Activated CD4-positive, alpha-beta memory T cell treated with anti-CD3 and anti-CD28 coated beads for 36 hours (primary cell): ENCODE measurements at regions of chr14 and their contacts with region 1.

Region 1: GRCh38 chr14:92352158-92352985 is 29.4 kb downstream of the SLC24A4 start:
- DNase-seq: peak; percentile 65
- H3K4me3 Mint-ChIP-seq: no peak overlapping the region
- H3K27ac Mint-ChIP-seq: no peak overlapping the region
- H3K4me1 Mint-ChIP-seq: peaks cover 2% of the 10 kb centered on the region
- H3K27me3 Mint-ChIP-seq: peaks cover 16% of the 10 kb centered on the region

Region 2: GRCh38 chr14:91866061-91866460 is 486.3 kb before region 1 on chr14:
- CTCF ChIA-PET with region 1: no interaction called
- POLR2A ChIA-PET with region 1: no interaction called
- intact Hi-C with region 1: loop called (anchors 10 kb)
- DNase-seq: peak; percentile 73
- H3K4me3 Mint-ChIP-seq: peak overlapping the region; percentile 87
- H3K27ac Mint-ChIP-seq: peak overlapping the region; percentile 94
- H3K4me1 Mint-ChIP-seq: peaks cover 92% of the 10 kb centered on the region
- H3K27me3 Mint-ChIP-seq: no peaks in the 10 kb centered on the region

Region 3: DNA sequence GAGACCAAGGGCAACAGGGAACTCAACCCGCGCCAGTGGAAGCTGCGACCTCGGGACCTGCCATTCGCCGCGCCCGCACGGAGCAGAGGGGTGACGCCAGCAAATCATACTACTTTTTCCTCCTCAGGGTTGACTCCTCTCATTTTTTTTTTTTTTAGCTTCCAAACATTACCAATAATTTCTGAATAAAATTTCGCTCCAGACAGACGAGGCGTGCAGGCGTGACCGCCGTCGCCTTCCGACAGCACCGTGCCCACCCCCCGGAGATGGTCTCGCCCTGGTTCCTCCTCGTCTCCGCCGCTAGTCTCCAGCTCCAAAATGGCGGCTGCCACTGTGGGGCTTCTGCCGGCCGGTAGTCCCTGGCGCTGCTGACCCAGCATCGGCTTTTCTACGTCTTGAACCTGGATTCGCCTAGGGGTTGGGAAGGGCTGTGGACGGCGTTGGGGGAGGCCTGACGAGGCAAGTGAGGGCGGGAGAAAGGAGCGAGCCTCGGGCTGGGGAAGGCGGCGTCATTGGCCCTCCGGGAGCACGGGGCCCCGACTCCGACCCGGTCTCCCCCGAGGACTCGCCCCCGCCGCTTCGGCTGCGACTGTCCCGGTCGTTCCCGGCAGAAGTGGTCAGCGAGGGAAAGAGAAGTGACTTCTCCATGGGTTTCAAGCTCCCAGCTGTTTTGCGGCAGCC is 230.6 kb before region 1 on chr14 and contains the starts of genes CPSF2 and NDUFB1:
- CTCF ChIA-PET with region 1: no interaction called
- POLR2A ChIA-PET with region 1: no interaction called
- intact Hi-C with region 1: loop called (anchors 10 kb)
- DNase-seq: peak; percentile 88
- H3K4me3 Mint-ChIP-seq: peak within 1 kb of the TSS; percentile 94
- H3K27ac Mint-ChIP-seq: peak within 1 kb of the TSS; percentile 97
- H3K4me1 Mint-ChIP-seq: peaks cover 27% of the 10 kb centered on the region
- H3K27me3 Mint-ChIP-seq: no peaks in the 10 kb centered on the region
- total RNA-seq, gene CPSF2: 100 to 105 TPM
- total RNA-seq, gene NDUFB1: 131 to 143 TPM

Region 4: DNA sequence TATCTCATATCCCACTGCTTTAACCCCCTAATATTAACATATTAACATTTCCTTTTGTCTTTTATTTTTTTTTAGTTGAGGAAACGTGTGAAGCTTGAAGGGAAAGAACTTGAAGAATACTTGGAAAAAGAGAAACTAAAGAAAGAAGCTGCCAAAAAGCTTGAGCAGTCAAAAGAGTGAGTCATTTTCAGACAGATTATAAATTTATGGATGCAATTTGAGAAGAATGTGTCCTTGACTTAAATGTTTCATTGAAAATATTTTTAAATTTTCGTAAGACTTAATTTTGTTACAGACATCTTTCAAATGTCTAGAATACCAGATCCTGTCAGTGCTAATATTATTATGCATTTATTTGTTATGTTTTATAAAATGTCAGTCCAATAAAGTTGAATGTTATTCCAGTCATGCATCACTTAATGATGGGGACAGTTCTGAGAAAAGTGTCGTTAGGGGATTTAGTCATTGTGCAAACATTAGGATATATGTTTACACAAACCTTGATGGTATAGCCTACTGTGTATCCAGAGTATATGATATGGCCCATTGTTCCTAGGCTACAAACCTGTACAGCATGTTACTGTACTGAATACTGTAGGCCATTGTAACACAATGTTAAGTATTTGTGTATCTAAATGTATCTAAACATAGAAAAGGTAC is 198.0 kb before region 1 on chr14:
- CTCF ChIA-PET with region 1: interaction called, 3 read pairs
- POLR2A ChIA-PET with region 1: no interaction called
- intact Hi-C with region 1: loop called (anchors 10 kb)
- DNase-seq: no peak
- H3K4me3 Mint-ChIP-seq: no peak overlapping the region
- H3K27ac Mint-ChIP-seq: no peak overlapping the region
- H3K4me1 Mint-ChIP-seq: no peaks in the 10 kb centered on the region
- H3K27me3 Mint-ChIP-seq: no peaks in the 10 kb centered on the region

Region 5: DNA sequence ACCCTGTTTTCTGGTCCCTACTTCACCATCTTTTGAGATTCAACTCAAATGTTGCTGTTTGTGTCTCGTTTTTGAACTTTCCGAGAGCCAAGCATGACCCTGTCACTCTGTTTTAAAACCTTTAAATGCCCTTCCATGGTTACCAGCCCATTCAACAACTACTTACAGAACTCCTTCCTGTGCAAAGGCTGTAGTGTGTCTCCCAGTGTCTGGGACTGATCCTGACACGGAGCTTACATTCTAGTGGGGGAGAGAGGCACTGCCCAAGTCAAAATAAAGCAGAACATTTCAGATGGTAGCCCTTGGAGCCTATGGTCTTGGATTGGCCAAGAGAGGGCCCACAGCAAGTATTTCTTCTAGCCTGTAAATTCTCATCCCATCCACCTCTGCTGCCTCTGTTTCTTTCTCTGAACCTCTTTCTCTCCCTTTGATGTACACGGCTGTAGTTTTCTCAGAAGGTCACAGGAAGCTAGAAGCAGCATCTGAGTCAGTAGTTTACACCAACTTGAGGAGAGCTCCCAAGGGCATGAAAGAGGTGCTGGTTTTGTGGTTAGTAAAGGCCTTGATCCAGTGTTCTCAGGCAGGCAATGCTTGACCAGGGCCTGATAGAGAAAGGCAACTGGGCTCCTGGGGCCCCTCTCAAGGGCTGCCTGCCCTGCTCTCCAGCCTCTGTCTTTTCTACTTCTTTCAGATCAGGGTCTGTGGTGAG is 71.7 kb before region 1 on chr14:
- CTCF ChIA-PET with region 1: no interaction called
- POLR2A ChIA-PET with region 1: no interaction called
- intact Hi-C with region 1: no loop called
- DNase-seq: no peak
- H3K4me3 Mint-ChIP-seq: no peak overlapping the region
- H3K27ac Mint-ChIP-seq: peak overlapping the region; percentile 5
- H3K4me1 Mint-ChIP-seq: peaks cover 18% of the 10 kb centered on the region
- H3K27me3 Mint-ChIP-seq: peaks cover 3% of the 10 kb centered on the region

Region 6: DNA sequence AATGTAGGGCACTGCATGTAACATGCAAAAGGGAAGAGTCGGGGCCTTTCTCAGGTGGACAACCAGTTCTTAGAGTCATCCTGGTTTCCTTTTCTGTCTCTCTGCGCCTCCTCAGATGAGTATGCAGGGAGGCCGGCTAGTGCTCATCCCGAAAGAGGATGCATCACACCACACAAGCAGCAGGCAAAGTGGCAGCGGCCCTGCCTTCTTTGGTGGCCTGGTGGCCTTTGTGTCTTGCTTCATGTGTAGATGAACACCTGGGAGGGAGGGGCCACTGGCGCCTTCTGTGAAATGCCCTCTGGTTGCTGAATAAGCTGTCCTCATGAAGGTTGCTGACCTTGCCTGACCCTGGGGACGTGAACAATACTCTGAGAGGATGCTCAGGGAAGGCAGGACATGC is 11.4 kb before region 1 on chr14:
- CTCF ChIA-PET with region 1: interaction called, 25 read pairs
- POLR2A ChIA-PET with region 1: interaction called, 4 read pairs
- intact Hi-C with region 1: loop called (anchors 1 kb)
- DNase-seq: peak; percentile 86
- H3K4me3 Mint-ChIP-seq: peak overlapping the region; percentile 28
- H3K27ac Mint-ChIP-seq: peak overlapping the region; percentile 83
- H3K4me1 Mint-ChIP-seq: peaks cover 29% of the 10 kb centered on the region
- H3K27me3 Mint-ChIP-seq: peaks cover 56% of the 10 kb centered on the region